Activated CD8-positive, alpha-beta T cell treated with anti-CD3 and anti-CD28 coated beads, Interleukin-2, amount 10 ng/mL, durations not matched to agents 7 days and 5 days (primary cell): ENCODE measurements at regions of chr10 and their contacts with region 1.

Region 1: DNA sequence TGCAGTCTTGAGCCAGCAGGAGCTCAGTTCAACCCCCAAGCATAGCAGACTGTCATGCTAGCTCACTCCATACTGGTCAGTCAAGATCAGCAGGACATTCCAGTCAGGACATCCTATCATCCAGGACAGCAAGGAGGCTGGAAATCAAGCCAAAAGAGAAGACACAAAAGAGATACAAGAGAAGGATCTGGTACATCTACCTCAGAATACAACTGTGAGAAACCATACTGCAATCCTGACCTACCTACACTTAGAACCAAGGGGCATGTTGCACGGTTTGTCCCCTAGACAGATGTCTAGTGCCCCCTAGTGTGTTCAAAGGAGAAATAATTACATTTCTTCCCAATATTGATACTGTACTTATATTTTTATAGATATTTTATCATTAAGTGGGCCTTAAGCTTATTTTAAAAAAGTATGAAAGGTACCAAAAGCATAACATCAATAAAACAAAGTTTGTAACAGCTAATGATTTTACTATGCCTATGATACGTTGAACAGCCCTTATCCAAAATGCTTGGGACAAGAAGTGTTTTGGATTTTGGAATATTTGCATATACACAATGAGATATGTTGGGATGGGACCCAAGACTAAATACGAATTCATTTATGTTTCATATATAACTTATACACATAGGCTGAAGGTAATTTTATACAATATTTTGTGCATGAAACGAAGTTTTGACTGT is 26.7 kb downstream of the ERCC6 start:
- DNase-seq: peak; percentile 47
- ATAC-seq: peak; percentile 51
- H3K4me3 Mint-ChIP-seq: no peak overlapping the region
- H3K27ac Mint-ChIP-seq: no peak overlapping the region
- H3K4me1 Mint-ChIP-seq: peaks cover 26% of the 10 kb centered on the region
- H3K27me3 Mint-ChIP-seq: peaks cover 4% of the 10 kb centered on the region

Region 2: GRCh38 chr10:49448924-49449323 is 63.3 kb before region 1 on chr10:
- CTCF ChIA-PET with region 1: no interaction called
- POLR2A ChIA-PET with region 1: no interaction called
- DNase-seq: no peak
- ATAC-seq: no peak
- H3K4me3 Mint-ChIP-seq: no peak overlapping the region
- H3K27ac Mint-ChIP-seq: no peak overlapping the region
- H3K4me1 Mint-ChIP-seq: peaks cover 7% of the 10 kb centered on the region
- H3K27me3 Mint-ChIP-seq: peaks cover 2% of the 10 kb centered on the region

Region 3: DNA sequence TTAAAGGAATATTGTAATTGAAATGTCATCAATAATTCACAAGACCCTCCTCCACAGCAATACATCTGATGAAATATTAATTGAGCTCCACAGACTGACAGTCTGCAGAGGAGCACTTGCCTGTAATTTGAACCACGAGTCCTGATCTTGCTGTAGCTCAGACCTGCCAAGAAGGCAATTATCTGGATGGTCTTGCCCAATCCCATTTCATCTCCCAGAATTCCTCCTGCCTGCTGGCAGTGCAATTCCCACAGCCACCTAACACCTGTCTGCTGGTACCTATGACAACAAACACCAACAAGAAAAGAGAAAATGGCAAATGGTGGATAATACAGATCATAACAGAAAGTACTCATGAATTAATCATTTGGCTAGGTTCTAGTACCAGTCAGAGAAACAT is 11.8 kb before region 1 on chr10:
- CTCF ChIA-PET with region 1: interaction called, 24 read pairs
- POLR2A ChIA-PET with region 1: no interaction called
- DNase-seq: no peak
- ATAC-seq: no peak
- H3K4me3 Mint-ChIP-seq: no peak overlapping the region
- H3K27ac Mint-ChIP-seq: no peak overlapping the region
- H3K4me1 Mint-ChIP-seq: peaks cover 12% of the 10 kb centered on the region
- H3K27me3 Mint-ChIP-seq: no peaks in the 10 kb centered on the region

Region 4: DNA sequence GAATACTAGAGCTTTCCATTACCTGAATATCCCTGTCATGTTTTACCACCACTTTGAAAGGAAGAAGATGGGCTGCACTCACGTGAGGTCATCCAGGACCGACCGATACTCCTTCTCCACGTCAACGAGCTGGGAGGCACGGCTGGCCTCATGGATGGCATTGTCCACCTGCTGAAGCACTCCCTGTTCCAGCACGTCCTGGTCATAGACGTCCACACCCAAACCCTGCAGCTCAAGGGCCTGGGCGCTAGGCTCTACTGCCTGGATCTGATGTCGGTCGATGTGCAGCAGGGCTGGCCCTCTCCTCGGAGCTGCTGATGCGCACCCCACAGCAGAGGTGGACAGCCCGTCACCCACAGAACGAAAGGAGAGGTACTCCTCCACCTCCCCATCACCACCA is 20.2 kb after region 1 on chr10:
- CTCF ChIA-PET with region 1: interaction called, 10 read pairs
- POLR2A ChIA-PET with region 1: no interaction called
- DNase-seq: no peak
- ATAC-seq: no peak
- H3K4me3 Mint-ChIP-seq: no peak overlapping the region
- H3K27ac Mint-ChIP-seq: no peak overlapping the region
- H3K4me1 Mint-ChIP-seq: peaks cover 27% of the 10 kb centered on the region
- H3K27me3 Mint-ChIP-seq: no peaks in the 10 kb centered on the region

Region 5: DNA sequence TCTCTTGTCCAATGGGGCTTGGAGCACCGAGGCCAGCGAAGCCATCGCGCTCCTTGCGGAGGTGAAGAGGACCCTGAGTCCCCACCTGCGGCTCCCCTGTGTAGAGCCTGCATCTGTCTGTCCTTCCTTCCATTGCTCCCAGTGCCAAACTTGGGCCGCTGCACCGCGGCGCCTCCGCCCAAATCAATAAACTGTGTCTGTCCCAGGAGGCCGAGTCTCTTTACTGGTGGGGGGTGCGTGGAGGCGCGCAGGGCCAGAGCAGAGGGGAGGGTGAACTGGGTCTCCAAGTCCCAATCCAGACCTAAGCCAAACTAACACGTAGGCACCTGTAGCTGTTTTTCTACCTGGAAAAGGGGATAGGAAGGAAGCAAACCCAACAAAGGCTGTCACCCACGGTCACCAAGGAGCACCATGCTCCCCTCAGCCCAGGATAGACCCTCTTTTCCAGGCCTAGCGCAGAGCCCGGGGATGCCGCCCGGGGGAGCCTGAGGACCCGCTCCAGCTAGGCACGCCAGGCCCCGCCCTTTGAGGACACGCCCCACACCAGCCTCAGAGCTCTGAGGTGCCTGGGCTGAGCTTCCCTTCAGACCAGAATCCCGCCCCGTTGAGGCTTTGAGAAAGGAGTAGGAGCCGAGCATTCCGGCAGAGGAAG is 100.4 kb after region 1 on chr10:
- CTCF ChIA-PET with region 1: no interaction called
- POLR2A ChIA-PET with region 1: no interaction called
- DNase-seq: no peak
- ATAC-seq: no peak
- H3K4me3 Mint-ChIP-seq: peak overlapping the region; percentile 6
- H3K27ac Mint-ChIP-seq: no peak overlapping the region
- H3K4me1 Mint-ChIP-seq: peaks cover 4% of the 10 kb centered on the region
- H3K27me3 Mint-ChIP-seq: peaks cover 67% of the 10 kb centered on the region

Region 6: DNA sequence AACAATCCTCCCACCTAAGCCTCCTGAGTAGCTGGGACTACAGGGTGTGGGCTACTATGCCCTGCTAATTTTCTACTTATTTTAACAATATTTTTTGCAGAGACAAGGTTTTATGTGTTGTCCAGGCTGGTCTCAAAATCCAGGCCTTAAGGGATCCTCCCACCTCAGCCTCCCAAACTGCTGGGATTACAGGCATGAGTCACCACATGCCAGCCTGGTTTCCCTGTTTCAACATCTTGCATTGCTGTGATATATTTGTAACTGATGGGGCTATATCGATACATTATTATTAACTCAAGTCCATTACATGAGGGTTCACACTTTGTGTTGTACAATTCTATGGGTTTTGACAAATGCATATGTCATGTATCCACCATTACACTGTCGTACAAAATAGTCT is 291.7 kb after region 1 on chr10:
- CTCF ChIA-PET with region 1: no interaction called
- POLR2A ChIA-PET with region 1: no interaction called
- DNase-seq: no peak
- ATAC-seq: no peak
- H3K4me3 Mint-ChIP-seq: no peak overlapping the region
- H3K27ac Mint-ChIP-seq: no peak overlapping the region
- H3K4me1 Mint-ChIP-seq: no peaks in the 10 kb centered on the region
- H3K27me3 Mint-ChIP-seq: peaks cover 6% of the 10 kb centered on the region